ENCODE measurements at regions of chr18 and their contacts with region 1.

Region 1: GRCh38 chr18:54558609-54559585 is 32.1 kb upstream of the DYNAP start:
- DNase-seq: no peak
- ATAC-seq: no peak
- H3K4me3 ChIP-seq: no peak overlapping the region
- H3K27ac ChIP-seq: no peak overlapping the region
- H3K4me1 ChIP-seq: no peaks in the 10 kb centered on the region
- H3K27me3 ChIP-seq: no peaks in the 10 kb centered on the region
- CTCF ChIP-seq: peak; percentile 42 to 67 (median 54)
- POLR2A ChIP-seq: no peak

Region 2: GRCh38 chr18:54127759-54128378 is 431.0 kb before region 1 on chr18:
- intact Hi-C with region 1: no loop called
- DNase-seq: peak in 2 of 5 donors; percentile 11 to 21
- ATAC-seq: peak in 3 of 4 donors; percentile 60 to 76 (median 72)
- H3K4me3 ChIP-seq: no peak overlapping the region
- H3K27ac ChIP-seq: no peak overlapping the region
- H3K4me1 ChIP-seq: peaks cover 0 to 6% (median 0%) of the 10 kb centered on the region in 12 donors
- H3K27me3 ChIP-seq: no peaks in the 10 kb centered on the region
- CTCF ChIP-seq: peak; percentile 26 to 59 (median 45)
- POLR2A ChIP-seq: no peak

Region 3: GRCh38 chr18:54641734-54642133 is 82.8 kb after region 1 on chr18:
- intact Hi-C with region 1: no loop called
- DNase-seq: no peak
- ATAC-seq: no peak
- H3K4me3 ChIP-seq: no peak overlapping the region
- H3K27ac ChIP-seq: no peak overlapping the region
- H3K4me1 ChIP-seq: no peaks in the 10 kb centered on the region
- H3K27me3 ChIP-seq: no peaks in the 10 kb centered on the region
- CTCF ChIP-seq: no peak
- POLR2A ChIP-seq: no peak

Region 4: DNA sequence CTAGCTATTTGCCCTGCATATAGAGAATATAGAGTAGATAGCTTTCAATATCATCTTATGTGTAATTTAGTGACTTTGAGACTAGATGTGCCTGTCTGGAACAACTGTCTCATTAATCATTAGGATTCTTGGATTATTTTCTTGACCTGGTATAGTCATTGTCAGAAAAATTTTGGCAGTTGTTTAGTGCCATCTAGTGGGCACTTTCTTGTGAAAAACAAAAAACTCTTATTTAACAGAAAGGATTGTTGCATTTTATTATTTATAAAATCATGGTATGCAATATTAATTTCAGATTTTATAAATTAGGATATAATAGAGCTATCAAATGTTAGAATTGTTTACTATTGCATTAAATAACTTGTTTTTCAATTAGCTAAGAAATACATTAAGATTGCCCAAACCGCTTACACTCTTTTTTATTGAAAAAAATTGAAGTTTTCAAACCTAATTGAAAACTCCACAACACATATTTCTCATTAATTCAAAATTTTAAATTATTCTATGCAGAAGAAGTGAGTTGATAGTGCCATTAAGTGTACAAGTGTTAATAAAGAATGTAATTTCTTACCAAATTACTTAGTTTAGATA is 112.5 kb after region 1 on chr18:
- intact Hi-C with region 1: loop called in 2 of 10 experiments (anchors 2 to 5 kb)
- DNase-seq: no peak
- ATAC-seq: no peak
- H3K4me3 ChIP-seq: no peak overlapping the region
- H3K27ac ChIP-seq: no peak overlapping the region
- H3K4me1 ChIP-seq: no peaks in the 10 kb centered on the region
- H3K27me3 ChIP-seq: peaks cover 0 to 4% (median 0%) of the 10 kb centered on the region in 9 donors
- CTCF ChIP-seq: peak; percentile 35 to 74 (median 61)
- POLR2A ChIP-seq: no peak

Region 5: GRCh38 chr18:54983041-54983686 is 424.3 kb after region 1 on chr18:
- intact Hi-C with region 1: loop called in 9 of 10 experiments (anchors 2 to 10 kb)
- DNase-seq: no peak
- ATAC-seq: peak in 3 of 4 donors; percentile 42 to 67 (median 49)
- H3K4me3 ChIP-seq: no peak overlapping the region
- H3K27ac ChIP-seq: no peak overlapping the region
- H3K4me1 ChIP-seq: no peaks in the 10 kb centered on the region
- H3K27me3 ChIP-seq: no peaks in the 10 kb centered on the region
- CTCF ChIP-seq: peak; percentile 60 to 80 (median 72)
- POLR2A ChIP-seq: no peak

Measured in heart left ventricle (tissue), 16 donors.